ENCODE measurements at regions of chr3 and their contacts with region 1.

Region 1: DNA sequence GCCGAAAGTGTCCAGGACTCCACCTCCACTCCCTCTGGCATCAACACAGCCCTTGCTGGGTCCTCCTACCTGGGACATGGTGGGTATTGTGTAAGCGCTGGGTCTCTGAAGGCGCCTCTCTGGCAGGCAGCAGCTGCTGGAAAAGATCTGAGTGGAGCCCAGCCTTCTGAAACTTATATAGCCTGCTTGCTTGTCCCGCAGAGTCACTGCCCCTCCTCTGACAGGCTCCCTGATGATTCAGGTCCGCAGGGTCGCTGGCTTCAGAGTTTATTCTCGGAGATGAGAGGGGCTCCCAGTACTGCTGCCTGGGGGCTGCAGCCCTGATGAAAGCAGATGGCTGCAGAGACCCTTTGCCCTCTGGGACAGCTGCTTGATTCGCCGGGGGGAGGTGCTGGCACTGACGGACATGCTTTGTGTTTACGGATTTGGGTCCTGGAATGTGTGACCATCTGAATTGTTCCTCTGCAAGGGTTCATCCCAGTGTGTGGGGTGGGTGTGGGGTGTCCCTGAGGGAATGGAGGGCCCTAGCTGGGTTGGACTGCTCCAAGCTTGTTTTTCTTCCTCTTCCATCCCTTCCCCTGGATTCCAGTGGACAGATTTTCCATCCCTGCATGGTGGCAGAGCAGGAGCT is at the start of gene MUSTN1:
- DNase-seq: no peak
- ATAC-seq: no peak
- H3K4me3 ChIP-seq: no peak within 1 kb of the TSS
- H3K4me3 Mint-ChIP-seq: no peak within 1 kb of the TSS
- H3K27ac ChIP-seq: no peak within 1 kb of the TSS
- H3K27ac Mint-ChIP-seq: no peak within 1 kb of the TSS
- H3K4me1 ChIP-seq: peaks cover 7 to 25% of the 10 kb centered on the region in 2 experiments
- H3K4me1 Mint-ChIP-seq: peaks cover 23 to 32% (median 28%) of the 10 kb centered on the region in 3 donors
- H3K27me3 ChIP-seq: no peaks in the 10 kb centered on the region
- H3K27me3 Mint-ChIP-seq: no peaks in the 10 kb centered on the region
- total RNA-seq, gene MUSTN1: 1.6 to 10.2 (median 4.1) TPM

Region 2: DNA sequence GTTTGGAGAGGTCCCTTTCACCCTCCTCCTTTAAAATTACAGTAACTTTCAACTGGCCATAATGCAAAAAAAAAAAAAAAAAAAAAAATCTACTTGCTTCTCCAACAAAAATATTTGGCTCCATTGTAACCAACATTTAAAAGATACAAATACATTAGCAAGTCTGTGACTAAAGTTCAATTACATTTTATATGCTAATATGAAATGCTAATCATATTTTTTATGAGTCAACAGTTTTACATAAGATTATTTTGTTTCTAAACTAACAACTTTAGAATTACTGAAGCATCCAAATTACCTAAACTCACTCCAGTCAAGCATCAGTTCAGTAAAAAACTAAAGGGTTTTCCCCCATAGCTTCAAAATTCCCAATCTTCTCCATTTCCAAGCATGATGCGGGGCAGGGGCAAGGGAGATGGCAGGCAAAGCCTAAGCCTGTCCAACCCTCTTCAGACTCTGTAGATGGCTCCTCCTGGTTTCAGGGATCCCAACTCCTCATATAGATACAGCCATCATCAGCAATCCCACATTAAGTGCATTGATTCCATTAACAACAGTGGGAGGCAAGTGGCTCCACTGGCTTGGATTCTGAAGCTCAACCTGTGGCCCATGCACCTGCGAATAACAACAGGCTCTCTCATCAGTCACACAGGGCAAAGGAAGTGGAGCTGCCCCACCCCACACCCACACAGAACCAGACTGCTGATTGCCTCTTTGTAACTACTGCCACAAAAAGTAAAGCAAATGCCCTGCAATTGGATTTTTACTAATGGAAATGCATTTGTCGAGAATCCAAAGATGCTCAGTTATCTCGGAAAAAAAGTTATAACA is 195.8 kb after region 1 on chr3:
- CTCF ChIA-PET with region 1: no interaction called
- POLR2A ChIA-PET with region 1: interaction called in 1 of 2 experiments, 13 read pairs
- DNase-seq: peak in 34 of 35 experiments; percentile 20 to 69 (median 40)
- ATAC-seq: peak; percentile 86 to 99 (median 96)
- H3K4me3 ChIP-seq: peak overlapping the region in 1 of 2 donors; percentile 23
- H3K4me3 Mint-ChIP-seq: peak overlapping the region; percentile 29 to 61 (median 43)
- H3K27ac ChIP-seq: peak overlapping the region; percentile 22
- H3K27ac Mint-ChIP-seq: peak overlapping the region; percentile 91 to 96
- H3K4me1 ChIP-seq: peaks cover 12 to 25% of the 10 kb centered on the region in 2 experiments
- H3K4me1 Mint-ChIP-seq: peaks cover 32 to 70% (median 59%) of the 10 kb centered on the region in 3 donors
- H3K27me3 ChIP-seq: no peaks in the 10 kb centered on the region
- H3K27me3 Mint-ChIP-seq: no peaks in the 10 kb centered on the region